Activated CD4-positive, alpha-beta T cell treated with anti-CD3 and anti-CD28 coated beads, Interleukin-2, amount 10 ng/mL, durations not matched to agents 24 days and 14 days (primary cell): ENCODE measurements at regions of chr4 and their contacts with region 1.

Region 1: DNA sequence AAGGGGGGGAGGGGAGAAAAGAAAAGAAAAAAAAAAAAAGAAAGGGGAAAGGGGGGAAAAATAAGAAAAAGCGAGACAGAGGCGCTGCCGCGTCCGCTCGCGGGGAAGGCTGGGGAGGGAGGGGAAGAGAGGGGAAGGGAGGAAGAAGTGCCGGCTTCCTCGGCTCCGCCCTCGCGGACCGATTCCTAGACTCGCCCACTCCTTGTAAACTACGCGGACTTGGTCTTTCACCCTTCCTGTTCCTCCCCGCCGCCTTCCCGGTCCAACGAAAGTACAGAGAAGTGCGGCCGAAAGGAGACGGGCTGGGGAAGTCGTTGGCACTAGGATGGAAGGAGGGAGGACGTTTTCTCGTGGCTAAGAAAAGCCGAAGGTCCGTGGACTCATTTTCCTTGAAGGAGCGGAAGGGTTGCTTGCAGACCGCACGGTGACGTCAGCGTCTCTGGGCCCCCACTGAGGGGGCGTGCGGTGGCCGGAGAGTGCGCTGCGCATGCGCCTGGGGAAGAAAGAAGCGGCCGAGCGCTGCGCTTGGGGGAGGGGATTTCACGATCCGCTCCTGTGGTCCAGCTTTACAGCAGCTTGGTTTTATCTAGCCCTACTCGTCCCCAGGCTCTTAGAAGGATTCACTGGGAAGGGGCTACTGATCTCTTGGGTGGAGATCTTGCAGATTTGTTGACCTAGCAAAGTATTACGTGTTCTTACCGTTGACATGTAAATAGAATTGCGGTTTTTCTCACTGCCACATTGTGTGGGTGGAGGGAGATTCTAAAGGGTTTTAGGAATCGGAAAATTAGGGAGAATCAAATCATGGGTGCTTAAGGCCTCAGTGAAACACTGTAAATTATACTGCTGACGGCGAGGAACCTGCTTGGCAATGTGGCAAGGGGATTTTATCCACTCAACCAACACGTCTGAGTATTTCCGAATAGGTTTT is at the start of gene CCNI:
- DNase-seq: peak; percentile 97
- H3K4me3 Mint-ChIP-seq: no peak within 1 kb of the TSS
- H3K27ac Mint-ChIP-seq: peak within 1 kb of the TSS; percentile 100
- H3K4me1 Mint-ChIP-seq: peaks cover 34% of the 10 kb centered on the region
- H3K27me3 Mint-ChIP-seq: peaks cover 6% of the 10 kb centered on the region
- total RNA-seq, gene CCNI: 214 TPM in 2 replicates

Region 2: DNA sequence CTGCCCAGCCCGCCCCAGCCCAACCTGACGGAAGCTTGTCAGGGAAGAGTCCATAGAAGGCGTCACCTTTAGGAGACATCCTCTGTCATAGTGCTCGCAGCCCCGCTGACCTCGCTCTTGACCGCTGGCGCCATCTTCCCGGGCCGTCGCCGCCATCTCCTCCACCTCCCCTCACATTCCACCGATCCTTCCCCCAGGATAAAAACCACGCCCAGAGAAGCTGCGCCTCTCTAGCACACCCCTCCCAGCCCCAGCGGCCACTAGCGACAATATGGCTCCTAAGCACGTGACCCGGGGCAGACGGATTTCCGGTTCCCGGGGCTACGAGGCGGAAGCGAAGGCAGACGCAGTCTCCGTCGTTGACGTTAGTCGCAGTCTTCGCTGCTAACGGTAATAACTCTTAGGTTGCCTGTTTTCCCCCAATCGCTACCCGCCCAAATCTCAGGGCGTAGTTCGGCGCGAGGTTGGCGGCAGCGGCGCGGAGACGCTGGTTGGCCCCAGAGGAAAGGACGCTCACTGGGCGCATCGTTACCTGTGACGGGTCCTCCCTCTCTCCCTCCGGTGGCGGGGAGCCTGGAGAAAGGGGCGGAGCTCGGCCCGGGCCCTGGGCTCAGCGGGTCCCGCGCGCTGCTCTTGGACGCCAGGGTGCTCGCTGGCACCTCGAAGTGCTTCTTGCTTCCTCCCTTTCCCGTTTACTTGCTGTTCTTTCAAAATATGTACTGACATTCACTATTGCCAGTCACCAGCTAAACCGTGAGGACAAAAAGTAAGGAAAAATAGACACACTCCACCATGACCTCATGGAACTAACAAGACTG is 1561.8 kb before region 1 on chr4 and contains the starts of genes RCHY1 and THAP6:
- intact Hi-C with region 1: loop called (anchors 5 kb)
- DNase-seq: peak; percentile 98
- H3K4me3 Mint-ChIP-seq: no peak within 1 kb of the TSS
- H3K27ac Mint-ChIP-seq: peak within 1 kb of the TSS; percentile 99
- H3K4me1 Mint-ChIP-seq: peaks cover 29% of the 10 kb centered on the region
- H3K27me3 Mint-ChIP-seq: no peaks in the 10 kb centered on the region
- total RNA-seq, gene RCHY1: 22.4 and 29.4 TPM in 2 replicates
- total RNA-seq, gene THAP6: 16.3 and 22.7 TPM in 2 replicates

Region 3: GRCh38 chr4:76055016-76055415 is 1021.1 kb before region 1 on chr4:
- intact Hi-C with region 1: loop called (anchors 1 kb)
- DNase-seq: peak; percentile 65
- H3K4me3 Mint-ChIP-seq: no peak overlapping the region
- H3K27ac Mint-ChIP-seq: peak overlapping the region; percentile 57
- H3K4me1 Mint-ChIP-seq: peaks cover 40% of the 10 kb centered on the region
- H3K27me3 Mint-ChIP-seq: peaks cover 5% of the 10 kb centered on the region

Region 4: DNA sequence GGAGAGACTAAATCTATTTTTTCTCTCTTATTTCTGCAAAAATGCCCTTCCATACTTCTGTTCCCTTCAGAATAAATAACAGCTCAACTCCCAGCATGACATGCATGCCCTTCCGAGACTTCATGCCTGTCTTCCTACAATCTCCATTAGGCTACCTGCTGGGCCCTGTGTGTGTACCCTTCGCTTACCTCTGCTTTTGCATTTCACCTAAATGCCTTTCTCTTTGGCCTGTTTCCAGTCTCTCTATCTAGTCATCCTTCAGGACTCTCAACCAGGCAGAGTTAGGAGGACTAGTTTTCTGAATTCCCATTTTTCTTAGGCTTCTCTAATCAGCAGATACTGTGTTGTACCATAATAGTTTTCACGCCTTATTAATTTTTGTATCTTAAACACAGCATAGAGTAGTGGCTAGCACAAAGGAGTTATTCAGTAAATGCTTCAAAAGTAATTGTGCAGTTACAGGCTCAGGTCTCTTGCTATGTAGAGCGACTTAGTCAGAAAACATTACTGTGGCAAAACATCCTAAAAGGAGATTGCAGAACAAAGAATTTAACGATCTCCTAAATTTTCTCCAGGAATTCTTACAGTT is 106.1 kb before region 1 on chr4:
- intact Hi-C with region 1: no loop called
- DNase-seq: no peak
- H3K4me3 Mint-ChIP-seq: no peak overlapping the region
- H3K27ac Mint-ChIP-seq: no peak overlapping the region
- H3K4me1 Mint-ChIP-seq: no peaks in the 10 kb centered on the region
- H3K27me3 Mint-ChIP-seq: peaks cover 15% of the 10 kb centered on the region

Region 5: GRCh38 chr4:76993787-76994641 is 82.1 kb before region 1 on chr4:
- intact Hi-C with region 1: loop called (anchors 5 kb)
- DNase-seq: peak; percentile 87
- H3K4me3 Mint-ChIP-seq: peak overlapping the region; percentile 67
- H3K27ac Mint-ChIP-seq: peak overlapping the region; percentile 79
- H3K4me1 Mint-ChIP-seq: peaks cover 40% of the 10 kb centered on the region
- H3K27me3 Mint-ChIP-seq: peaks cover 26% of the 10 kb centered on the region

Region 6: DNA sequence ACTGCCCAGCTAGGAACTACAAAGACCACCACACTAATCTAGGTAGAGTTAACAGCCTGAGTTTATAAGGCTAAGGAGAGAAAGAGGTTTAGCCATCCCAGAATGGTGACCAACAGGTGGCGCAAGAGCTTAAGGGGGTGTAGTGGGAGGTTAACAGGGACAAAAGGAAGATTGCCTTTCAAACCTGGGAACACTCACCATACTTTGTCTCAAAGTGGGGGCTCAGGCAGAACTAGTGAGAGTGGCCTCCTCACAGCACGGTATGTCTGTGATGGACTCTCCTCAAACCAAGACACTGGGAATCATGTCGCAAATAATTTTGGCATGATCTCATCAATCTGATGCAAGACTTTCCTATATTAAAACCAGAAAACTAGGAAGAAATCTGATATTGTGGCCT is 23.8 kb before region 1 on chr4:
- intact Hi-C with region 1: loop called (anchors 2 kb)
- DNase-seq: peak; percentile 87
- H3K4me3 Mint-ChIP-seq: no peak overlapping the region
- H3K27ac Mint-ChIP-seq: no peak overlapping the region
- H3K4me1 Mint-ChIP-seq: peaks cover 3% of the 10 kb centered on the region
- H3K27me3 Mint-ChIP-seq: no peaks in the 10 kb centered on the region

Region 7: GRCh38 chr4:77193511-77194102 is 117.5 kb after region 1 on chr4:
- intact Hi-C with region 1: loop called (anchors 10 kb)
- DNase-seq: peak; percentile 91
- H3K4me3 Mint-ChIP-seq: peak overlapping the region; percentile 85
- H3K27ac Mint-ChIP-seq: peak overlapping the region; percentile 92
- H3K4me1 Mint-ChIP-seq: peaks cover 23% of the 10 kb centered on the region
- H3K27me3 Mint-ChIP-seq: peaks cover 7% of the 10 kb centered on the region

Region 8: GRCh38 chr4:77819843-77820648 is 743.9 kb after region 1 on chr4:
- intact Hi-C with region 1: loop called (anchors 5 kb)
- DNase-seq: peak; percentile 98
- H3K4me3 Mint-ChIP-seq: peak overlapping the region; percentile 97
- H3K27ac Mint-ChIP-seq: peak overlapping the region; percentile 100
- H3K4me1 Mint-ChIP-seq: peaks cover 38% of the 10 kb centered on the region
- H3K27me3 Mint-ChIP-seq: peaks cover 1% of the 10 kb centered on the region